Natural killer cell (primary cell): ENCODE measurements at regions of chr22 and their contacts with region 1.

Region 1: GRCh38 chr22:22802339-22802970 is 85.2 kb upstream of the IGLL5 start:
- DNase-seq: peak in 1 of 2 donors; percentile 65
- ATAC-seq: peak; percentile 68 to 73 (median 70)
- H3K4me3 ChIP-seq: no peak overlapping the region
- H3K4me3 Mint-ChIP-seq: no peak overlapping the region
- H3K27ac ChIP-seq: no peak overlapping the region
- H3K27ac Mint-ChIP-seq: peak overlapping the region; percentile 42 to 85
- H3K4me1 ChIP-seq: peaks cover 20% of the 10 kb centered on the region
- H3K4me1 Mint-ChIP-seq: peaks cover 71 to 73% of the 10 kb centered on the region in 2 donors
- H3K27me3 ChIP-seq: no peaks in the 10 kb centered on the region
- H3K27me3 Mint-ChIP-seq: no peaks in the 10 kb centered on the region
- CTCF ChIP-seq: peak; percentile 71

Region 2: GRCh38 chr22:22848364-22848866 is 46.0 kb after region 1 on chr22:
- intact Hi-C with region 1: loop called (anchors 1 kb)
- DNase-seq: peak; percentile 56 to 85
- ATAC-seq: peak; percentile 58 to 90 (median 83)
- H3K4me3 ChIP-seq: no peak overlapping the region
- H3K4me3 Mint-ChIP-seq: no peak overlapping the region
- H3K27ac ChIP-seq: no peak overlapping the region
- H3K27ac Mint-ChIP-seq: peak overlapping the region in 1 of 2 donors; percentile 56
- H3K4me1 ChIP-seq: peaks cover 14% of the 10 kb centered on the region
- H3K4me1 Mint-ChIP-seq: peaks cover 46 to 68% of the 10 kb centered on the region in 2 donors
- H3K27me3 ChIP-seq: no peaks in the 10 kb centered on the region
- H3K27me3 Mint-ChIP-seq: no peaks in the 10 kb centered on the region
- CTCF ChIP-seq: peak; percentile 92

Region 3: DNA sequence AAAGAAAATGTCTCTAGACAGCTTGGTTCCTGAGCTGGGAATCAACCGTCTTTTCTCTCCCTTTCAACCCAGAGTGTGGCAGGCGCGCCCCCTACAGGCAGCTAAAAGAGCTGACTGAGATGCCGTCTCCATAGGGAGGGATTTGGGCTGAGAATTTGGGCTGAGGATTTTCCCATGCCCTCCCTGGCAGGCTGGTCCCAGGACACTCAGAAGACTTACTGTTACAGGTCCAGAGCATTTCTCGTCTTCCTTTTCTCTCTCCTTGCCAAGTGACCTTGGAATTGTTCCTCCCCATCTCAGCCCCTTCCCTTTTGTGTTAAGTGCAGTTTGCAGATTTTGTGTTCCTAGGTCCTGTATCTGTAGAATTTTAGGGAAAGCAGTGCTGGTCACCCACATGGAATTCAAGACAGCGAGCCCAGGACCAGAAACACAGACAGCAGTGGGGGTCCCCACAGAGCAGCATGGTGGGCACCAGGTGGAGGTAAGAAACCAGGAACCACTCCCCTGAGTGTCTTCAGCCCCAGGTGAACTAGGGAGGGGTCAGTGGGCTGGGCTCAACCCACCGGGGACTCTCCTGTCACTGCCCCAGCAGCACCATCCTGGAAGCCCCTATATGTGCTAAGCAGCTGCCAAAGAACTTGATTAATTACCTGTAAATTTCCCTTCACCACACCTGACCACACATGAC is 75.2 kb after region 1 on chr22:
- intact Hi-C with region 1: loop called (anchors 1 kb)
- DNase-seq: peak; percentile 74 to 86
- ATAC-seq: peak; percentile 60 to 78 (median 74)
- H3K4me3 ChIP-seq: no peak overlapping the region
- H3K4me3 Mint-ChIP-seq: no peak overlapping the region
- H3K27ac ChIP-seq: no peak overlapping the region
- H3K27ac Mint-ChIP-seq: no peak overlapping the region
- H3K4me1 ChIP-seq: peaks cover 14% of the 10 kb centered on the region
- H3K4me1 Mint-ChIP-seq: peaks cover 22 to 31% of the 10 kb centered on the region in 2 donors
- H3K27me3 ChIP-seq: no peaks in the 10 kb centered on the region
- H3K27me3 Mint-ChIP-seq: no peaks in the 10 kb centered on the region
- CTCF ChIP-seq: peak; percentile 77

Region 4: DNA sequence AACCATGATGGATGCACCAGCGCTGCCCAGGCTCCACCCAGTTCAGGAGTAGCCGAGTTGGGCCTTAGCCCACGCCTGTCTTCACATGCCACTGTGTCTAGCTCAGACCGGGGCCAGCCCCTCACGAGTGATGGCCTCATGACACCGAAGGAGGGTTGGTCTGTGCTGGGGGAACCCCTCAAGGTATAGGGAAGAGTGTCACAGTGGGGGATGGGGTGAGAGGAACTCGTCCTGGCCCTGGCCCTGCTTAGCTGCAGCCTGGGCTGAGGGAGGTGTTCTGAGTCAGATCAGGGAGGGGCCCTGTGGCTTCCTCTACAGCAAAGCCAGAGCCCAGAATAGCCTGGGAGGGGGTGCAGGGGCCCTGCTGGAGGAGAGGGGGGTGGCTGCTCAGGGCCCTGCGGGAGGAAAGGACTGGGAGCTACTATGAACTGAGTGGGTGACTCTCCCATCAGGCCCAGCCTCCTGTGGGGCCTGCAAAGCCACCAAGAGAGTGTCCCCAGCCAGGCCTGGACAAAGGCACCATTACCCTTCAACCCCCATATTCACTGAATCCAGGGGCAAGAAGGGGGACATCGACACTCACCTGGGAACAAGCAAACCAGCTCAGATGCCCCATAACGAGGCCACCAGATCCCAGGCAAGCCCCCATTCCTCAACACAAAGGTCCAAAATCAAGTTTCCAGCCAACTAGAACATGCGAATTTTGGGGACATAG is 126.4 kb after region 1 on chr22:
- intact Hi-C with region 1: no loop called
- DNase-seq: peak; percentile 69 to 71
- ATAC-seq: peak; percentile 94 to 97 (median 95)
- H3K4me3 ChIP-seq: no peak overlapping the region
- H3K4me3 Mint-ChIP-seq: peak overlapping the region; percentile 74
- H3K27ac ChIP-seq: peak overlapping the region; percentile 83
- H3K27ac Mint-ChIP-seq: peak overlapping the region; percentile 92 to 93
- H3K4me1 ChIP-seq: peaks cover 74% of the 10 kb centered on the region
- H3K4me1 Mint-ChIP-seq: peaks cover 53 to 81% of the 10 kb centered on the region in 2 donors
- H3K27me3 ChIP-seq: no peaks in the 10 kb centered on the region
- H3K27me3 Mint-ChIP-seq: no peaks in the 10 kb centered on the region
- CTCF ChIP-seq: no peak